ENCODE measurements at regions of chr19 and their contacts with region 1.

Region 1: GRCh38 chr19:47600246-47601179 is 8.4 kb upstream of the BICRA start:
- DNase-seq: peak; percentile 98 to 100 (median 100)
- ATAC-seq: peak; percentile 97
- H3K4me3 ChIP-seq: peak overlapping the region; percentile 80
- H3K4me3 Mint-ChIP-seq: peak overlapping the region; percentile 86
- H3K27ac ChIP-seq: peak overlapping the region; percentile 55 to 79
- H3K27ac Mint-ChIP-seq: peak overlapping the region; percentile 89
- H3K4me1 ChIP-seq: peaks cover 24% of the 10 kb centered on the region
- H3K4me1 Mint-ChIP-seq: peaks cover 20% of the 10 kb centered on the region
- H3K27me3 ChIP-seq: no peaks in the 10 kb centered on the region
- H3K27me3 Mint-ChIP-seq: no peaks in the 10 kb centered on the region
- CTCF ChIP-seq: no peak

Region 2: GRCh38 chr19:47273313-47273977 is 327.1 kb before region 1 on chr19:
- CTCF ChIA-PET with region 1: no interaction called
- POLR2A ChIA-PET with region 1: interaction called, 9 read pairs
- intact Hi-C with region 1: loop called in 1 of 2 experiments (anchors 10 kb)
- DNase-seq: peak; percentile 82 to 95 (median 88)
- ATAC-seq: peak; percentile 63
- H3K4me3 ChIP-seq: peak overlapping the region; percentile 100
- H3K4me3 Mint-ChIP-seq: peak overlapping the region; percentile 100
- H3K27ac ChIP-seq: peak overlapping the region; percentile 92 to 99
- H3K27ac Mint-ChIP-seq: peak overlapping the region; percentile 99
- H3K4me1 ChIP-seq: peaks cover 24% of the 10 kb centered on the region
- H3K4me1 Mint-ChIP-seq: peaks cover 28% of the 10 kb centered on the region
- H3K27me3 ChIP-seq: no peaks in the 10 kb centered on the region
- H3K27me3 Mint-ChIP-seq: no peaks in the 10 kb centered on the region
- CTCF ChIP-seq: no peak

Region 3: DNA sequence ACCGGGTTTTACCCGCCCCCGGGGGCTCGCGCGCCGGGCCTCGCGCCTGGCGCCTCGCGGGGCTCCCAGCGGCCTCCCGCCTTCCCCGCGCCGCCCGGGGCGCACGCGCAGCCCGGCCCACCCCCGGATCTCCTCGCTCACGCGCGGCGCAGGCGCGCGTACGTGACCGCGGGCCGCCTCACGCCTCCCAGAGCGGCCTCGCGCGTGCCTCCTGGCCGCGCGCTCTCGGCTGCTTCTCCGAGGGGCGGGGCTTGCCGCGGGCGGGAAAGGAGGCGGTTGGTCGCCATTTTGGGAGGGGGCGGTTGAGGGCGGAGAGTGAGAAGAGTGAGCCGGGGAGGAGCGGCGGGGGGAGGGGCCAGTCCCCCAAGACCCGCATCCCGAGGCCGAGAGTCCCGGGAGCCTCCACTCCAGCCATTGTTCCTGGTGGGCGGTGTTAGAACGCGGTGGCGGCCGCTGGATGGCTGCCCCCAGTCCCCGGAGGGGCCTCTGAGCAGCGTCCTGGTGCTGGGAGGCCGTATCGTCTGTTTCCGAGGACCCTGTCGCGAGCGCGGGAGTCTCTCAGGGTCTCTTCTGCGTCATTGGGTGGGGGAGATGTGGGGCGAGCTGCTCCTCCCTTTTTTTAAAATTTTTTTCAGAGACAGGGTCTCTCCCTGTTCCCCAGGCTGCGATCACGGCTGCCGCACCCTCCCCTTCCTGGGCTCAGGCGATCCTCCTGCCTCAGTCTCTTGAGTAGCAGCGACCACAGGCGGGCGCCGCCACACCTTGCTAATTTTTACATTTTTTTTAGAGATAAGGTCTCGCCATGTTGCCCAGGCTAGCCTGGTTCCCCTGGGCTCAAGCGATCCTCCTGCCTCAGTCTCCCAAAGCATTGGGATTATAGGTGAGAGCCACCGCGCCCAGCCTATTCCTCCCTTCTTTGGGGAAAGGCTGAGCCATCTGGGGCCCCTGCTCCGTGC is 27.2 kb before region 1 on chr19 and contains the start of gene ZNF541:
- CTCF ChIA-PET with region 1: interaction called, 7 read pairs
- POLR2A ChIA-PET with region 1: interaction called, 17 read pairs
- intact Hi-C with region 1: loop called (anchors 1 to 2 kb)
- DNase-seq: peak; percentile 80 to 96 (median 88)
- ATAC-seq: peak; percentile 88
- H3K4me3 ChIP-seq: peak within 1 kb of the TSS; percentile 63
- H3K4me3 Mint-ChIP-seq: peak within 1 kb of the TSS; percentile 76
- H3K27ac ChIP-seq: peak within 1 kb of the TSS in 1 of 2 donors; percentile 34
- H3K27ac Mint-ChIP-seq: peak within 1 kb of the TSS; percentile 15
- H3K4me1 ChIP-seq: peaks cover 48% of the 10 kb centered on the region
- H3K4me1 Mint-ChIP-seq: peaks cover 42% of the 10 kb centered on the region
- H3K27me3 ChIP-seq: no peaks in the 10 kb centered on the region
- H3K27me3 Mint-ChIP-seq: no peaks in the 10 kb centered on the region
- CTCF ChIP-seq: no peak
- total RNA-seq, gene ZNF541: 0.81 to 0.88 TPM

Region 4: DNA sequence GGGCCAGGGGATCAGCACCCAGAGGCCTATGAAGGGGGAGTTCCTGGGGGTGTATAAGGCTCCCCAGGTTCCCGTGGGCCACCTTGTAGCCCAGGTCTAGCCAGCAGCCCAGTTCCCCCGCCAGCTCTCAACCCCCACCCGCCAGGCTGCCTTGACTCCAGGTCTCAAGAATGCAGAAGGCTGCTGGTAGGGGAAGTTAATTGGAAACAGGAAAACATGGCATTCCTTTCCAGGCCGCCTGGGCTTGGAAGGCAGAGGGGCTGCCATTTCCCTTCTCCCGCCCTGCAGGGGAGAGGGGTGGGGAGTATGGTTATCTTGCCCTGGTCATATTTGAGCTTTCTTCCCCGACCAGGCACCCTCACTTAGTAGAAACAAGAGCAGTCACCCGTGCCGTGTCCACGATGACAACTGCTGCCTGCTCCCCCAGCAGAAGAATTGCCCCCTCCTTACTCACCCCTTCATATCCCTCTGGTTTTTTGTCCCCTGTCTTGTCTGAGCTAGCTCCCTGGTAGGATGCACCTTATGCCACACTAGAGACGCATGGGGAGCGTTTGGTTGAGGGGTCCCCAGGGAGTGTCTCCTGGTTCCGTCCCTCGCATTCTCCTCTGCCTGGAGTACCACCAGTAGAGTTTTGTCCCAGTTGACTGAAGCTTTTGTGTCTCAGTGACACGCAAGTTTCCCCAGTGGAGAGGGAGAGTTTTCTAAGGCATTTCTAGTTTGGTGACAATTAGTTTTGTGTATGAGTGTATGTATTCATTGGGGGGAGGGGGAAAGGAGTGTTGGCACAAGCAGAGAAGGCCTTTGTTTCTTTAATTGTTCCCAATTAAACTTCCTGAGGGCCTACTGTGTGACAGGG is 12.9 kb after region 1 on chr19:
- CTCF ChIA-PET with region 1: interaction called, 8 read pairs
- POLR2A ChIA-PET with region 1: interaction called, 61 read pairs
- intact Hi-C with region 1: loop called (anchors 1 kb)
- DNase-seq: no peak
- ATAC-seq: no peak
- H3K4me3 ChIP-seq: no peak overlapping the region
- H3K4me3 Mint-ChIP-seq: peak overlapping the region; percentile 38
- H3K27ac ChIP-seq: no peak overlapping the region
- H3K27ac Mint-ChIP-seq: peak overlapping the region; percentile 35
- H3K4me1 ChIP-seq: peaks cover 55% of the 10 kb centered on the region
- H3K4me1 Mint-ChIP-seq: peaks cover 47% of the 10 kb centered on the region
- H3K27me3 ChIP-seq: no peaks in the 10 kb centered on the region
- H3K27me3 Mint-ChIP-seq: no peaks in the 10 kb centered on the region
- CTCF ChIP-seq: no peak

Measured in CD4-positive, alpha-beta T cell (primary cell).